Left ventricle myocardium inferior (tissue), 1 donor: ENCODE measurements at regions of chr14 and their contacts with region 1.

Region 1: DNA sequence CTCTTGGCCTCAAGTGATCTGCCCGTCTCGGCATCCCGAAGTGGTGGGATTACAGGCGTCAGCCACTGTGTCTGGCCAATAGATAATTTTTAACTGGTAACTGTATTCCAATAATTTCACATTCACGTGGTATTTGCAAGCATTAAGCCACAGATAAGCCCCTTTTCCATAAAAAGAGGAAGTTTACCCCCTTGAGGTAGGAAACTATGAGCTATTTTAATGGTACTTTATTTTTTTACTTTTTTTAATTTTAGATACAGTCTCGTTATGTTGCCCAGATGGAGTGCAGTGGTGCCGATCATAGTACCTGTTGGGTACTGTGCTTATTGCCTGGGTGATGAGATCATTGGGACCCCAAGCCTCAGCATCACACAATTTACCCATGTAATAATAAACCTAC is 42.9 kb upstream of the AP4S1 start:
- DNase-seq: no peak
- H3K4me3 ChIP-seq: no peak overlapping the region
- H3K27ac ChIP-seq: no peak overlapping the region
- H3K4me1 ChIP-seq: peaks cover 17% of the 10 kb centered on the region
- H3K27me3 ChIP-seq: no peaks in the 10 kb centered on the region
- CTCF ChIP-seq: no peak

Region 2: GRCh38 chr14:30849354-30849753 is 133.2 kb before region 1 on chr14:
- intact Hi-C with region 1: no loop called
- DNase-seq: no peak
- H3K4me3 ChIP-seq: no peak overlapping the region
- H3K27ac ChIP-seq: no peak overlapping the region
- H3K4me1 ChIP-seq: no peaks in the 10 kb centered on the region
- H3K27me3 ChIP-seq: peaks cover 24% of the 10 kb centered on the region
- CTCF ChIP-seq: no peak

Region 3: GRCh38 chr14:31070431-31070830 is 87.9 kb after region 1 on chr14:
- intact Hi-C with region 1: no loop called
- DNase-seq: no peak
- H3K4me3 ChIP-seq: no peak overlapping the region
- H3K27ac ChIP-seq: no peak overlapping the region
- H3K4me1 ChIP-seq: no peaks in the 10 kb centered on the region
- H3K27me3 ChIP-seq: no peaks in the 10 kb centered on the region
- CTCF ChIP-seq: no peak

Region 4: DNA sequence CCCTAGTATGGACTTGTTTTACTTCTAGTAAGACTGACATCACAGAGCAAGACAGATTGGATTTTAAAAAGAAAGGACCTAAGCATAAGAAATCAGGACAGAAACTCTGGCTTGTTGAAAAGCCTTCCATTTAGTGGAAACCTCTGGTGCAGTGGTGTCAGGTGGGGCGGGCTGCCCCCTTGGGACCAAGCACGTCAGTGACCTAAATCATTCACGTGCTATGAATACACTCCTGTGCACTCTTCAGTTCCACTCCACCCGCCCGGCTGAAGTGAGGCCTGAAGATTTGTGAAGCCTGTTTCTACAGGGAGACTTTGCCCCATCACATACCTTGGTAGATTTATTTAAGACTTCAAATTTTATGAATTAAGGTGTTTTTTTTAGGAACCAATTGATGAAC is 101.9 kb after region 1 on chr14:
- intact Hi-C with region 1: loop called (anchors 5 kb)
- DNase-seq: no peak
- H3K4me3 ChIP-seq: no peak overlapping the region
- H3K27ac ChIP-seq: no peak overlapping the region
- H3K4me1 ChIP-seq: no peaks in the 10 kb centered on the region
- H3K27me3 ChIP-seq: no peaks in the 10 kb centered on the region
- CTCF ChIP-seq: no peak